CD4-positive, alpha-beta memory T cell (primary cell): ENCODE measurements at regions of chr5 and their contacts with region 1.

Region 1: DNA sequence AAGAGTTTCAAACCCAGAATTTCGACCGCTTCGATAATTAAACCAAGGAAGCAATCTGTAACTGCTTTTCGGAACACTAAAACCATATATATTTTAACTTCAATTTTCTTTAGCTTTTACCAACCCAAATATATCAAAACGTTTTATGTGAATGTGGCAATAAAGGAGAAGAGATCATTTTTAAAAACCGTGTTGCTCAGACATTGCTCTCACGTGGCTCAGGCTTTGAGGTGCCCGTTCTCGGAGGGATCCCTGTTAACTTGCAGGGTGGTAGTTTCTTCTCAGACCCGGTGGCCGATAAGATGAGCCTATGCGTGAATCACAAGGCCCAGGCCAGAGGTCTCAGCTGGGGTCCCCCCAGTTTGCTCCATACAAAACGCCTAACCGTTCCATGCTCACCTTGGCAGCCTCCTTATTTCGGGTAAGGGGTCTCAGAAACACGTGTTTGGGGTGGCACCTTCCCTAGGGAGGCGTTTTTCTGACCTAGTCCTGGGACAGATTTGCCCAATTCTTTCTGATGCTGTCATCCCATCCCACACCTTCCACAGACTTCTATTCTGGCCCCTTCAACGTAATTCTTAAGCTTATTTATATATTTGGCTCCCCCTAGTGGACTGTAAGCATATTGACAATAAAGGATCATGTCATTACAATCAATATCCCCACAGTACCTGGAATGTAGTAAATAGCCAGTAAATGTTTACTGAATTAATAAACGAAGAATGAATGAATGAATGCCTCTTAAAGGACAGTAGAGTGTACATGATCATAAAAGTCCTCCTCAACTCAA is 48.1 kb downstream of the THBS4 start:
- DNase-seq: peak in 4 of 5 donors; percentile 50 to 58 (median 54)
- H3K4me3 ChIP-seq: peak overlapping the region in 1 of 2 donors; percentile 34
- H3K4me3 Mint-ChIP-seq: peak overlapping the region; percentile 73 to 88 (median 86)
- H3K27ac ChIP-seq: no peak overlapping the region
- H3K27ac Mint-ChIP-seq: peak overlapping the region; percentile 16 to 92 (median 81)
- H3K4me1 ChIP-seq: peaks cover 11% of the 10 kb centered on the region
- H3K4me1 Mint-ChIP-seq: peaks cover 5 to 15% (median 7%) of the 10 kb centered on the region in 4 donors
- H3K27me3 ChIP-seq: no peaks in the 10 kb centered on the region
- H3K27me3 Mint-ChIP-seq: no peaks in the 10 kb centered on the region

Region 2: GRCh38 chr5:79857714-79858409 is 225.4 kb before region 1 on chr5:
- CTCF ChIA-PET with region 1: interaction called, 5 read pairs
- POLR2A ChIA-PET with region 1: no interaction called
- intact Hi-C with region 1: loop called (anchors 1 kb)
- DNase-seq: peak; percentile 57 to 71 (median 61)
- H3K4me3 ChIP-seq: no peak overlapping the region
- H3K4me3 Mint-ChIP-seq: no peak overlapping the region
- H3K27ac ChIP-seq: no peak overlapping the region
- H3K27ac Mint-ChIP-seq: no peak overlapping the region
- H3K4me1 ChIP-seq: no peaks in the 10 kb centered on the region
- H3K4me1 Mint-ChIP-seq: peaks cover 0 to 4% (median 0%) of the 10 kb centered on the region in 4 donors
- H3K27me3 ChIP-seq: no peaks in the 10 kb centered on the region
- H3K27me3 Mint-ChIP-seq: peaks cover 3 to 6% of the 10 kb centered on the region in 2 donors

Region 3: DNA sequence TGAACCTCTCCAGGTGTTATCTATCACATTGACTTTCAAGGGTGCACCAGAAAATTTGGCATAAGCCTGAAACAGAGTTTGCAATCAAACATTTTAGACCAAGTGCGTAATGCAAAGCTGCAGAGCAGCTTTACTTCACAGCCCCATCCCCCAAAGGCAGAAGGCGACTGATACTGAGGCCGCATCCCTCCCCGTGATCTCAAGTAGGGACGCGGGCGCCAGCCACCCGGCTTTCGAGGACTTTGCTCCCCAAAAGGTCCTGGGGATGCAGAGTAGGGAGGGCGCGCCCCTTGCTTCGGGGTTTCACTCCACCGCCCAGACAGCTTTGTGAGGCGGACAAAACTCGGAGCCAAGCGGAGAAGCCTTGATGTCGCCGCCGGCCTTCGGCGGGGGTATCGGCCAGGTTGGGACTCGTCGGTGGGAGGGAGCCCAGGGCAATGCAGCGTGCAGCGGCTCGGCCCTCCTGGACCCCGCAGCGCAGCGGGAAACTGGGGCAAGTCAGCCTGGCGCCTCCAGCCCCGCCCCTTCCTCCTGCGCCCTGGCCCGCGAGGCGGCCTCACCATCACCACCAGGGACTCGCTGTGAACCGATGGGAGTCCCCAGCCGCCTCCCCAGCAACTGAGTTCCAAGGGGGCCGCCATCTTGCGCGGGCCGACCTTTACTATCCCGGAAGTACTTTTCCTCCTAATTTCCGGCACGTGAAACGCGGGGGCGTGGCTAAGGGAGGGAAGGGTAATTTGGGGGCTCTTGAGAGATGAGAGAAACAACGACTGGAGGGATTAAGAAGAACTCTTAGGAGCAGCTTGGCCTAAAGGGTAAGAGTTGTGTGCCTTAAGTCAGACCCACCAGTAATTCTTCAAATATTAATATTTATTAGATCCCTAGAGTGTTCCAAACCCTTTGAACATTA is 92.4 kb before region 1 on chr5 and contains the start of gene MTX3:
- CTCF ChIA-PET with region 1: interaction called, 3 read pairs
- POLR2A ChIA-PET with region 1: no interaction called
- intact Hi-C with region 1: loop called (anchors 1 kb)
- DNase-seq: peak; percentile 80 to 90 (median 85)
- H3K4me3 ChIP-seq: peak within 1 kb of the TSS; percentile 63 to 75
- H3K4me3 Mint-ChIP-seq: peak within 1 kb of the TSS; percentile 82 to 93 (median 87)
- H3K27ac ChIP-seq: peak within 1 kb of the TSS; percentile 67
- H3K27ac Mint-ChIP-seq: peak within 1 kb of the TSS; percentile 83 to 96 (median 93)
- H3K4me1 ChIP-seq: peaks cover 23% of the 10 kb centered on the region
- H3K4me1 Mint-ChIP-seq: peaks cover 15 to 23% (median 19%) of the 10 kb centered on the region in 4 donors
- H3K27me3 ChIP-seq: no peaks in the 10 kb centered on the region
- H3K27me3 Mint-ChIP-seq: peaks cover 7% of the 10 kb centered on the region in 2 donors
- total RNA-seq, gene MTX3: 22.7 to 22.9 TPM

Region 4: DNA sequence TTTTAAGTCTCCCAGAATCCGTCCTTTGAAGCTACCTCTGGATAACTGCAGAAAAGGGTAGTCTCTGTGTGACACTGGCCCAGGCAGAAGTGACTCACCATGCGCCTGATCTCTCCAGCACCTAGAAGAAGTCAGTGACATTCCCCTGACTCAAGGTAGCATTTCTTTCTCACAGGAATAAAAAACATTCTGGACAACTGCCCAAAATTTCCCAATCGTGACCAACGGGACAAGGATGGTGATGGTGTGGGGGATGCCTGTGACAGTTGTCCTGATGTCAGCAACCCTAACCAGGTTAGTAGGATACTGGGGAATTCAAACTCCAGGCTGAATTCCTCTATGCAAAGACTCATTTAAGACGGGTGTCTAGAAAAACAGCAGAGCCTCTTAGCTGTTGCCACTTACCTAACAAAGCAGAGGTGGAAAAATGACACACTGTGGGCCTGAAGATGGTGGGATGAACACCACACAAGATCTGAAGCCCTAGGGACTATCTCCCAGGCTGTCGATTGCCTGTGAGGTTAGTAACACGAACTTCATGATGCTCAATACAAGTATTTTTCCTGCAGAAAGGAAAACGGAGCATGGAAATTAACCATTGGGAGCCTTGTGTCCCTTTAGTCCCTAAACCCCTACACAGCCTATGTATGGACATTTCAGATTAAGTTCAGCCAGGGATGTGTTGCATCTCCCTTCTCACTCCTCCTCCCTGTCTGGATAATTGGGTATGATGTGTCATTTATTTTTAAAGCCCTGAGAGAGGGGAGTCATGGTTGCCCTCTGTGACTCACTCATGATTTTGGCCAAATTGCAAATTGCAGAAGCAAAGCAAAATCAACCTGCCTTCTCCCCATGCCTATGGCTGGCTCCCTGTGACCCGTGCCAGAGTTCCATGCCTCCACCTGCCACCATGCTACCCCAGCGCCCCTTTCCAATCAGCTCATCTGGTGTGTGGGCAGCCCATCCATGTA is 10.9 kb before region 1 on chr5:
- CTCF ChIA-PET with region 1: interaction called, 29 read pairs
- POLR2A ChIA-PET with region 1: no interaction called
- intact Hi-C with region 1: no loop called
- DNase-seq: no peak
- H3K4me3 ChIP-seq: no peak overlapping the region
- H3K4me3 Mint-ChIP-seq: no peak overlapping the region
- H3K27ac ChIP-seq: no peak overlapping the region
- H3K27ac Mint-ChIP-seq: no peak overlapping the region
- H3K4me1 ChIP-seq: no peaks in the 10 kb centered on the region
- H3K4me1 Mint-ChIP-seq: no peaks in the 10 kb centered on the region
- H3K27me3 ChIP-seq: no peaks in the 10 kb centered on the region
- H3K27me3 Mint-ChIP-seq: no peaks in the 10 kb centered on the region

Region 5: GRCh38 chr5:80117446-80117845 is 34.1 kb after region 1 on chr5:
- CTCF ChIA-PET with region 1: interaction called, 18 read pairs
- POLR2A ChIA-PET with region 1: no interaction called
- intact Hi-C with region 1: no loop called
- DNase-seq: no peak
- H3K4me3 ChIP-seq: no peak overlapping the region
- H3K4me3 Mint-ChIP-seq: peak overlapping the region in 5 of 8 donors; percentile 25 to 76 (median 43)
- H3K27ac ChIP-seq: no peak overlapping the region
- H3K27ac Mint-ChIP-seq: peak overlapping the region in 5 of 7 donors; percentile 24 to 81 (median 65)
- H3K4me1 ChIP-seq: peaks cover 31% of the 10 kb centered on the region
- H3K4me1 Mint-ChIP-seq: peaks cover 47 to 62% (median 56%) of the 10 kb centered on the region in 4 donors
- H3K27me3 ChIP-seq: no peaks in the 10 kb centered on the region
- H3K27me3 Mint-ChIP-seq: no peaks in the 10 kb centered on the region

Region 6: GRCh38 chr5:80308526-80308925 is 225.2 kb after region 1 on chr5:
- CTCF ChIA-PET with region 1: interaction called, 286 read pairs
- POLR2A ChIA-PET with region 1: no interaction called
- intact Hi-C with region 1: loop called (anchors 2 kb)
- DNase-seq: no peak
- H3K4me3 ChIP-seq: no peak overlapping the region
- H3K4me3 Mint-ChIP-seq: no peak overlapping the region
- H3K27ac ChIP-seq: no peak overlapping the region
- H3K27ac Mint-ChIP-seq: no peak overlapping the region
- H3K4me1 ChIP-seq: no peaks in the 10 kb centered on the region
- H3K4me1 Mint-ChIP-seq: peaks cover 0 to 1% (median 0%) of the 10 kb centered on the region in 4 donors
- H3K27me3 ChIP-seq: no peaks in the 10 kb centered on the region
- H3K27me3 Mint-ChIP-seq: no peaks in the 10 kb centered on the region